ENCODE measurements at regions of chr14 and their contacts with region 1.

Region 1: DNA sequence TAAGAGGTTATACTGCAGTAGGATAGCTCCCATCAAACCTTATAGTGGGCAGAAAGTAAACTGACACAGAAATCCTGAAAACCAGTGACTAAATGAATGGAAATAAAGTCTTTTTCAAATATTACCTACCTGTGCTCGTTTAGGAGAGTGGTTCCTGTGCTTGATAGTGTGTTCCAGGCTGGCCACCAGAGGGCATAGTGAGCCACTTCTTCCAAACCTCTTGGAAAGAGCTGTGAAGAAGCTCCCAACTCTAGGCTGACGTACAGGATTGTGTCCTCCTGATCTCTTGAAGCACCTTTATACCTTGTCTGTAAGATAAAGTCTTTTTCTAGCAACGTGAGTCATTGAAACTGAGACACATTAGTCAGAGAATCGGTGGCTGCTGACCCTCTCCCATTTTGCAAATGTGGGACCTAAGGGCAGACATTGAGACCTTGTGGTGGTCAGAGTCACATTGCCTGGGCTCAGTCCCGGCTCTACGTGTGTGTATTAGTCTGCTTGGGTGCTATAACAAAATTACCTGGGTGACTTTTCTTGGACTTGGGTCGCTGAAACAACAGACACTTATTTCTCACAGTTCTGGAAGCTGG is 17.6 kb downstream of the TDP1 start:
- DNase-seq: peak; percentile 27
- H3K4me3 ChIP-seq: no peak overlapping the region
- H3K27ac ChIP-seq: no peak overlapping the region
- H3K27me3 ChIP-seq: no peaks in the 10 kb centered on the region
- CTCF ChIP-seq: peak; percentile 92

Region 2: DNA sequence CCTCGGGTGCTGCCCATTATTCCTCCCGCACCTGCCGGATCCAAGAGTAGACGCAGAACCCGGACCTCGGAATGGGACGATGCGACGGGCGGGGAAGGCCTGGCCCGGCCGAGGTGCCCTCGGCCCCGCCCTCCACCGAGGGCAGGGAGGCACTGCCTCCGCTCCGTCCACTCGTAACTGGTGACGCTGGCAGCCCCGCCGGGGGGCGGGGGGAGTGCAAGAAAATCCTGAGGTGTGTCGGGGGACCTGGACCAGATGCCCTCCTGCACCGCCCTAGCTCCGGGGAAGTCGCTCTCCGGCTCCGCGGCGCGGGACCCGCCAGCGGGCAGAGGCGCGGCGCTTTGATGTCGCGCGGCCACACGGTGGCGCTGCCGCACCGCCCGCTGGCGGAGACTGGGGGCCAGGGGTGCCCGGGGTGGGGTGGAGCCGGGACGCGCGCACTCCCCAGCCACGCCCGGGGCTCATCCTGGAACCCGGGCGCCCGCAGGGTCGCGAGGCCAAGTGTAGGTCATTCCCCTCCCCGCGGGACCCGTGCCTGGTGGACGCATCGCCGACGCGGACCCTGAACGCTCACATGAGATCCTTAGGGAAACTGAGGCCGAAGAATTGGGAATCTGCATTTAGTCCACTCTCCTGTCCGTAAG is 946.1 kb before region 1 on chr14:
- CTCF ChIA-PET with region 1: interaction called, 21 read pairs
- POLR2A ChIA-PET with region 1: no interaction called
- DNase-seq: no peak
- H3K4me3 ChIP-seq: peak overlapping the region; percentile 71
- H3K27ac ChIP-seq: no peak overlapping the region
- H3K27me3 ChIP-seq: no peaks in the 10 kb centered on the region
- CTCF ChIP-seq: peak; percentile 60

Region 3: GRCh38 chr14:89954070-89955028 is 19.0 kb before region 1 on chr14 and contains the start of gene EFCAB11:
- CTCF ChIA-PET with region 1: interaction called, 87 read pairs
- POLR2A ChIA-PET with region 1: no interaction called
- DNase-seq: peak; percentile 94
- H3K4me3 ChIP-seq: peak within 1 kb of the TSS; percentile 84
- H3K27ac ChIP-seq: peak within 1 kb of the TSS; percentile 57
- H3K27me3 ChIP-seq: no peaks in the 10 kb centered on the region
- CTCF ChIP-seq: 0 out of 2 replicates have a peak, but pooled peaks have one; percentile 15
- polyA plus RNA-seq, gene EFCAB11: 5.0 and 5.9 TPM in 2 replicates

Region 4: DNA sequence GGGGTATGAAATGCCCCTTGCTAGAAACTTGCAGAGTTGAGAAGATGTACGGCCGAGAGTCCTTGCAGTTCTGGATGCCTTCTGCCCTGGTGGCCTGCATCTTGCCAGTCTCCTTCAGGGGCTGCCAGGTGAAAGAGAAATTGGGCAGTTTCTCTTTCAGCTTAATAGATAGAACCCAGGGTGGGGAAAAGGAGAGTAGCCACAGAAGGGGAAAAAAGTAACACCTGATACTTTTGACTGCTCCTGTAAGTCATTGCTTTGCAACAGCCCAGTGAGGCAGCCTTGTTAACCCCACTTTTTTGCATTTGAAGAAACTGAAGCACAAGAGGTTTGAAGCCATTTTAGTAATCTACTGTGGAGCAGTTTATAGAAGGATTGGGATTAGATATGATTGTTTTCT is 10.0 kb after region 1 on chr14:
- CTCF ChIA-PET with region 1: interaction called, 66 read pairs
- POLR2A ChIA-PET with region 1: no interaction called
- DNase-seq: no peak
- H3K4me3 ChIP-seq: no peak overlapping the region
- H3K27ac ChIP-seq: no peak overlapping the region
- H3K27me3 ChIP-seq: no peaks in the 10 kb centered on the region
- CTCF ChIP-seq: no peak

Region 5: DNA sequence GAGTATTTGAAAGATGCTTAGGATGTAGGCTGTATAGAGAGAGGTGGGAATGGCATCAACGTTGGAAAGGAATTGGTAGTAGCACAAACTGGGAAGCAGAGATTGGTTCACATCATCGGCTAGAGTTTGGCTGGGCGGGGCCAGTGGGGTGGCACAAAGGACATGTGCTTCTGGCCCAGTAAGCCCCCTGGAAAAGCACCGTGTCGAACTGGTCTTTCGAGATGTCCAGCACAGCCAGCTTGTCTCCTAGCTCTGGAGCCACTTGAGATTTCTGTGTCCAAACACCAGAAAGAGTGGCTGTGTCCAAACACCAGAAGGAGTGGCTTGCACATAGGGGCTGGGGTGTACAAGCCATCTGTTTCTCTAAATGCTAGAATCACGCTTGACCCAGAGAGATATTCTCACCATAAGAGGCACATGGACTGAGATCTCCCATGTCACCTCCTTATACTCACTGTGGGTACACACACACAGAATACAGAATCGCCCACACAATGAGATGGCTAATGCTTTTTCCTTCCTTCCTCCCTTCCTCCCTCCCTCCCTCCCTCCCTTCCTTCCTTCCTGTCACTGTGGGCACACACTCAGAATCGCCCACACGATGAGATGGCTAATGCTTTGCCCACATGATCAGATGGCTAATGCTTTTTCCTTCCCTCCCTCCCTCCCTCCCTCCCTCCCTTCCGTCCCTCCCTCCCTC is 46.6 kb after region 1 on chr14:
- CTCF ChIA-PET with region 1: interaction called, 10 read pairs
- POLR2A ChIA-PET with region 1: no interaction called
- DNase-seq: no peak
- H3K4me3 ChIP-seq: no peak overlapping the region
- H3K27ac ChIP-seq: no peak overlapping the region
- H3K27me3 ChIP-seq: no peaks in the 10 kb centered on the region
- CTCF ChIP-seq: no peak

Region 6: GRCh38 chr14:90091393-90091792 is 118.1 kb after region 1 on chr14:
- CTCF ChIA-PET with region 1: no interaction called
- POLR2A ChIA-PET with region 1: no interaction called
- DNase-seq: no peak
- H3K4me3 ChIP-seq: no peak overlapping the region
- H3K27ac ChIP-seq: no peak overlapping the region
- H3K27me3 ChIP-seq: peaks cover 2% of the 10 kb centered on the region
- CTCF ChIP-seq: no peak

Region 7: DNA sequence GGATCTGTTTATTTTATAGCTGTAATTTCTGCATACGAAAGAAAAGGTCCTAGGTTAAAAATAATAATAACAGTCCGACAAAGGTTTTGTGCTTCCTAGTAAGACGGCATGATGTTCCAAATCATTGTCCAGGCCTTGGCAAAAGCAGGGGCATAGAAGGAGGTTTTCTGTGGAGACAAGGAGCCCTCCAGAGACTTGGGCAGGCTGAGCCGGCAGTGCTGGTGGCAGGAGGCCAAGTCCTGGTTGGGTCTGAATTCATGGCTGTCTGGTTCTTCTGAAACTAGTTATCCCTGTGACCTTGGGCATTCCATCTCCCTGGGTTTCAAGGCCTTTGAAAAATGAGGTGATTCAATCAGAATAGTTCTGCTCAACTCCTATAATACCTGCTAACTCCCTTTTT is 132.4 kb after region 1 on chr14:
- CTCF ChIA-PET with region 1: no interaction called
- POLR2A ChIA-PET with region 1: no interaction called
- DNase-seq: no peak
- H3K4me3 ChIP-seq: no peak overlapping the region
- H3K27ac ChIP-seq: no peak overlapping the region
- H3K27me3 ChIP-seq: no peaks in the 10 kb centered on the region
- CTCF ChIP-seq: no peak